ENCODE measurements at regions of chr18 and their contacts with region 1.

Region 1: DNA sequence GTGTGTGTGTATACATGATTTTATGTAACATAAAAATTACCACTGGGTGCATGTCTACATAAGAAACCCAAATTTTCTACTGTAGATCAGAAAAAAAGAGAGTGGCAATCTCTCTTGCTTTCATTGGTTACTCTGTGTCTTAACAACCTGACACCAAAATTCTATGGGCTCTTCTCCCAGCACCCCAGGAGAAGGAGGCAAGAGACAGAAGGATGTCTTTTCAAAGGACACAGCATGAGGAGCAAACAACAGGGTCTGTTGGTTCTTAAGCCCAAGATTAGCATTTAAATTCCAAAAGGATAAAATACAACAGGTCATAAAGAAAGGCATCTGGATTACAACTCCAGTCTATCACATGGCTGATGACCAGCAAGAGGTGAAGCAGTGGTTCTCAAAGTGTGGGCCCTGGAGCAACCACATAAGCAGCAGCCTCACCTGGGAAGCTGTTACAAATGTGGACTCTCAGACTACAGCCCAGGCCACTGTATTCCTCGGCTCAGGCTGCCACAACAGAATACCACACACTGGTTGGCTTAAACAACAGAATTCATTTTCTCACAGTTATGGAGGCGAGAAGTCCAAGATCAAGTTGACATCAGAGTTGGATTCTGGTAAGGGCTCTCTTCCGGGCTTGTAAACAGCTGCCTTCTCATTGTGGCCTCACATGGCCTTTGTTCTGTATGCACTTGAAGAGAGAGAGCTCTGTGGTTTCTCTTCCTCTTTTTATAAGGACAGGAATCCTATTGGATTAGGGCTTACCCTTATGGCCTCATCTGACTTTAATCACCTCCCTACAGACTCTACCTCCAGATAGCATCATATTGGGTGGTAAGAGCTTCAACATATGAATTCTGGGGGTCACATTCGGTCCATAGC is 79.8 kb upstream of the RNF152 start:
- DNase-seq: no peak
- ATAC-seq: peak; percentile 10
- H3K4me3 Mint-ChIP-seq: no peak overlapping the region
- H3K27ac Mint-ChIP-seq: no peak overlapping the region
- H3K4me1 Mint-ChIP-seq: peaks cover 3% of the 10 kb centered on the region
- H3K27me3 Mint-ChIP-seq: no peaks in the 10 kb centered on the region
- CTCF ChIP-seq: no peak

Region 2: DNA sequence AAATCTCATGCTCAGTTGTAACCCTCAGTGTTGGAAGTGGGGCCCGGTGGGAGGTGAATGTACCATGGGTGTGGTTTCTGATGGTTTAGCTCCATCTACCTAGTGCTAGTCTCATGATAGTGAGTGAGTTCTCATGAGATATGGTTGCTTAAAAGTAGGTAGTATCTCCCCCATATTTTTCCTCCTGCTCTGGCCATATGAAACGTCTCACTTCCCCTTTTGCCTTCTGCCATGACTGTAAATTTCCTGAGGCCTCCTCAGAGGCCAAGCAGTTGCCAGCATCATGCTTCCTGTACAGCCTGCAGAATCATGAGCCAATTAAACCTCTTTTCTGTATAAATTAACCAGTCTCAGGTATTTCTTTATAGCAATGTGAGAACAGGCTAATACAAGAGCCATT is 17.0 kb before region 1 on chr18:
- CTCF ChIA-PET with region 1: no interaction called
- POLR2A ChIA-PET with region 1: no interaction called
- intact Hi-C with region 1: loop called (anchors 1 kb)
- DNase-seq: no peak
- ATAC-seq: no peak
- H3K4me3 Mint-ChIP-seq: no peak overlapping the region
- H3K27ac Mint-ChIP-seq: no peak overlapping the region
- H3K4me1 Mint-ChIP-seq: peaks cover 19% of the 10 kb centered on the region
- H3K27me3 Mint-ChIP-seq: peaks cover 31% of the 10 kb centered on the region
- CTCF ChIP-seq: no peak